ENCODE measurements at regions of chr6 and their contacts with region 1.

Region 1: DNA sequence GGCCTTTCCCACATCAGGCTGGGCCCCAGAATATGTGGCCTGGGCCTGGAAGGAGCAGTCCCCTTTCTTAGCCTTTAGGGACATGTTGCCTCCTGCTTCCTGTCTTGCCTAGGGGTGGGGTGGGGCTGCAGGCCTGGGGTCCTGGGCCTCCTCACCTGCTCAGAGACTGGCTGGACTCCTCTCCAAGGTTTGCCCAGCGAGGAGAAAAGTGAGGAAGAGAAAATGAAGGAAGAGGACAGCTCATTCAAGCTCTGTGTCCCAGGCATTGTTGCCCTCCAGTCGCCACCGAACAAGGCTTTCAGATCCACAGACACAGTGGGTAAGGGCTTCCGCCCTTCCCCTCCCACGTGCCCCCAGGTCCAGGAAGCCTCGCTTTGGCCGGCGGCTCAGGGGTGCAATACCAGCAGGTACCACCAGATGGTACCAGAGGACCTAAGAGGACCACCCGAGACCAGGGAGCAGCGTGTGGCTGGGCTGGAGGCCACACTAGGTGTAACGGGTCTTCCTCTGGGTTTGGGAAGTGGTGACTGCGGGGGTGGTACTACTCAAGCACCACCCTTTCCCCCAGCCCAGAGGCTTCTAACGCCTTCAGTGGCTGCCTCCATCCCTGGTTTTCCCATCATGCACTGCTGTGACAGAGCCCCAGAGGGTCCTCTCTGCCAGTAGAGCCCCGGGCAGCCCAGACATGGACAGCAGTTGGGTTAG is 5.5 kb upstream of the BAK1 start:
- DNase-seq: peak; percentile 70 to 91 (median 82)

Region 2: DNA sequence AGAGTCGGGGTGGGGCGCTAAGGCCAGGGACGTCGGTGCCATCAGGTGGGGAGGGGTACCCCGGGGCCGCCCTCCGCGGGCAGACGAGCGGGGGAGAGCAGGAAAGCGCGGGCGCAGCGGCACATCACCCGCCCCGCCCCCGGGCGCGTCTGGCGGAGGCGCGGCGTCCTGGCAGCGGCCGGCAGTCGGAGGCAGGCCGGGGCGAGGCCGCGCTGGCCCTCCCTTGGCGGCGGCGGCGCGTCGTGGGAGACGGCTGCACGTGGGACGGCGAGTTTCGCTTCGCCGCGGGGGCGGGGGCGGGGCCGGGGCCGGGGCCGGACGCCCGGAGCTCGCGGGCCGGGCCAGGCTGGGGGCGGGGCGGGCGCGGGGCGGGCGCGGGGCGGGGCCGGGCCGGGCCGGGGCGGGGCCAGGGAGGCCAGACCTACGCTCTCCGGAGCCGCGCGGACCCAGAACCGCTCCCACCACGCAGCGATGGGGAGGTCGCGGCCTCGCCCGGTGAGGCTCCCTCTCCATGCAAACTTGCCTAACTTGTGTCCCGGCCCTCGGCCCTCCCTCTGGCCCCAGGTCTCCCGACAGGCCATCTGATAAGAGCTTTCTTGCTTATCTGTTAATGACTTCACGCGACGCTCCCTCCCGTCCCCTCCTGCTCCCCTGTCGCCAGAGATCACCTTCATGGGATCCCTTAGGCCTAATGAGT is 48.1 kb after region 1 on chr6:
- intact Hi-C with region 1: loop called (anchors 5 kb)
- DNase-seq: peak in 36 of 42 donors; percentile 7 to 79 (median 44)

Region 3: GRCh38 chr6:33700391-33701050 is 115.0 kb after region 1 on chr6:
- intact Hi-C with region 1: loop called (anchors 5 kb)
- DNase-seq: peak in 41 of 42 donors; percentile 28 to 84 (median 65)

Region 4: DNA sequence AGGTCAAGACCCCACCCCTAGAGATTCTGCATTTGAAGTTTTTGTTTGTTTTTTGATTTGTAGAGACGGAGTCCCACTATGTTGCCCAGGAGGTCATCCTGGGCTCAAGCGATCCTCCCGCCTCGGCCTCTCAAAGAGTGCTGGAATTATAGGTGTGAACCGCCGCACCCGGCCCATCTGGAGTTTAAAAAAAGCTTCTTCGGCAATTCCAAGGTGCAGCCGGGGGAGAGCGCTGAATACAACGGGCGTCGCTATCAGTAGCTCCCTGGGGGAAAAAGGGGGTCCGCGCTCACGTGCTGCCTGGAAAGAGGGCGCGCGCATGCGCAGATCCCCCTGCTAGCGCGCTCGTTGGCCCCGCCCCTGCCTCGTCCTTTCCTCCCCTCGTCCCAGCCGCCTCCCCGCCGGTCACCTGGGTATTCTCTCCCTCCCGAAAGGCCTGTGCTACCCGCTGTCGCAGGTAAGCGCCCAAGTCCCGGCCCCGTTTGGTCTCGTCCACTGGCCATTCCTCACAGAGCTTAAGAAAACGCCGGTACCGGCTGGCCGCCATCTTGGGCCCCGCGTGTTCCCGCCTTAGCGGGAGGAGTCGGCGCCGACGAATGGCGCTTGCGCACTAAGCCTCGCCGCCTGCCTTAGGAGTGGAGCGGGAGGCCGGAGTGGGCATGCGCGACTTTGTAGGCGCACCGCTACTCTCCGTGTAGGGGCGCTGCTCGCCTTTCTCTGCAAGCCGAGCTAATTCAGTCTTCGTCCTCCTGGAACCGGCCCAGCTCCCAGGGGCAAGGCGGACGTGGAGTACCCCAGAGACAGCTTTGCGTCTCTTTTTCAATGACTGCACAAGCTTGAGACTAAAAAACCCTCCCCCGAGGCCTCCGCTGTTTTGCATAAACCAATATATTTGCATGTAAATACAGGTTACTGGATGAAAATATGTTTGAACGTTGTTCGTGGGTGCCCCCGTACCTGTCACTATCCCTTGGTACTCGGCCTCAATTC is 125.9 kb after region 1 on chr6 and contains the start of gene UQCC2:
- intact Hi-C with region 1: no loop called
- DNase-seq: peak; percentile 90 to 99 (median 97)